CD4-positive, alpha-beta T cell (primary cell): ENCODE measurements at regions of chrX and their contacts with region 1.

Region 1: GRCh38 chrX:41209853-41210252 is 124.1 kb upstream of the DDX3X start:
- DNase-seq: no peak
- ATAC-seq: no peak
- H3K4me3 ChIP-seq: no peak overlapping the region
- H3K4me3 Mint-ChIP-seq: no peak overlapping the region
- H3K27ac ChIP-seq: no peak overlapping the region
- H3K27ac Mint-ChIP-seq: no peak overlapping the region
- H3K4me1 ChIP-seq: no peaks in the 10 kb centered on the region
- H3K4me1 Mint-ChIP-seq: no peaks in the 10 kb centered on the region
- H3K27me3 ChIP-seq: no peaks in the 10 kb centered on the region
- H3K27me3 Mint-ChIP-seq: no peaks in the 10 kb centered on the region
- CTCF ChIP-seq: no peak

Region 2: GRCh38 chrX:40755291-40756249 is 454.3 kb before region 1 on chrX:
- CTCF ChIA-PET with region 1: no interaction called
- POLR2A ChIA-PET with region 1: no interaction called
- intact Hi-C with region 1: no loop called
- DNase-seq: no peak
- ATAC-seq: no peak
- H3K4me3 ChIP-seq: no peak overlapping the region
- H3K4me3 Mint-ChIP-seq: no peak overlapping the region
- H3K27ac ChIP-seq: no peak overlapping the region
- H3K27ac Mint-ChIP-seq: no peak overlapping the region
- H3K4me1 ChIP-seq: no peaks in the 10 kb centered on the region
- H3K4me1 Mint-ChIP-seq: peaks cover 4% of the 10 kb centered on the region
- H3K27me3 ChIP-seq: no peaks in the 10 kb centered on the region
- H3K27me3 Mint-ChIP-seq: no peaks in the 10 kb centered on the region
- CTCF ChIP-seq: no peak

Region 3: GRCh38 chrX:40816906-40817305 is 392.9 kb before region 1 on chrX:
- CTCF ChIA-PET with region 1: no interaction called
- POLR2A ChIA-PET with region 1: no interaction called
- intact Hi-C with region 1: no loop called
- DNase-seq: no peak
- ATAC-seq: no peak
- H3K4me3 ChIP-seq: no peak overlapping the region
- H3K4me3 Mint-ChIP-seq: no peak overlapping the region
- H3K27ac ChIP-seq: no peak overlapping the region
- H3K27ac Mint-ChIP-seq: no peak overlapping the region
- H3K4me1 ChIP-seq: no peaks in the 10 kb centered on the region
- H3K4me1 Mint-ChIP-seq: no peaks in the 10 kb centered on the region
- H3K27me3 ChIP-seq: no peaks in the 10 kb centered on the region
- H3K27me3 Mint-ChIP-seq: no peaks in the 10 kb centered on the region
- CTCF ChIP-seq: no peak

Region 4: DNA sequence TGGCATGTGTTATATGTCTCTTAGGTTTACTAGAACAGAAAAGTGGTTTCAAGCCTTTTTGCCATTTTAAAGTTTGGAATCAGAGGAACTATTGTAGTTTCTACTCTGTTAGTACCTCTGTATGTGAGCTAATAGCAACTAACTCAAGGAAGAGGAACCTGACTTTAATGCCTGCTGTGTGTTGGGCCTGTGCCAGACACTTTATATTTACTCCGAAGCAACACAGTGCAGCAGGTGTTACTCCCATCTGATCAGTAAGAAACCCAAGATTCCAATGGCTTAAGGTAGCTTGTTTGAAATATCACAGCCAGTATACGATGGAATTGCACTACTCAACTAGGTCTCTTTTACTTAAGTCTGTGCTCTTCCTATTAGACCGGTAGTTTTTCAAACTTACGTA is 45.4 kb before region 1 on chrX:
- CTCF ChIA-PET with region 1: no interaction called
- POLR2A ChIA-PET with region 1: no interaction called
- intact Hi-C with region 1: loop called in 1 of 2 experiments (anchors 10 kb)
- DNase-seq: no peak
- ATAC-seq: no peak
- H3K4me3 ChIP-seq: no peak overlapping the region
- H3K4me3 Mint-ChIP-seq: no peak overlapping the region
- H3K27ac ChIP-seq: no peak overlapping the region
- H3K27ac Mint-ChIP-seq: no peak overlapping the region
- H3K4me1 ChIP-seq: no peaks in the 10 kb centered on the region
- H3K4me1 Mint-ChIP-seq: peaks cover 6% of the 10 kb centered on the region
- H3K27me3 ChIP-seq: no peaks in the 10 kb centered on the region
- H3K27me3 Mint-ChIP-seq: no peaks in the 10 kb centered on the region
- CTCF ChIP-seq: no peak